Gastrocnemius medialis (tissue), 4 donors: ENCODE measurements at regions of chr16 and their contacts with region 1.

Region 1: GRCh38 chr16:70653809-70654771 is 7.7 kb downstream of the IL34 start:
- DNase-seq: peak; percentile 51 to 77
- ATAC-seq: peak; percentile 76 to 89
- H3K4me3 ChIP-seq: peak overlapping the region; percentile 21 to 28 (median 24)
- H3K27ac ChIP-seq: peak overlapping the region in 3 of 4 donors; percentile 33 to 66 (median 57)
- H3K4me1 ChIP-seq: peaks cover 4 to 11% of the 10 kb centered on the region in 2 donors
- H3K27me3 ChIP-seq: no peaks in the 10 kb centered on the region
- CTCF ChIP-seq: peak; percentile 88 to 94 (median 93)
- POLR2A ChIP-seq: no peak

Region 2: GRCh38 chr16:70364399-70364798 is 289.7 kb before region 1 on chr16:
- in situ Hi-C with region 1: loop called (anchors 10 to 25 kb)
- intact Hi-C with region 1: no loop called
- DNase-seq: no peak
- ATAC-seq: no peak
- H3K4me3 ChIP-seq: no peak overlapping the region
- H3K27ac ChIP-seq: peak overlapping the region in 1 of 4 donors; percentile 85
- H3K4me1 ChIP-seq: peaks cover 0 to 14% of the 10 kb centered on the region in 2 donors
- H3K27me3 ChIP-seq: no peaks in the 10 kb centered on the region
- CTCF ChIP-seq: no peak
- POLR2A ChIP-seq: no peak

Region 3: GRCh38 chr16:70372921-70373728 is 281.0 kb before region 1 on chr16:
- in situ Hi-C with region 1: loop called (anchors 10 to 25 kb)
- intact Hi-C with region 1: loop called (anchors 2 kb)
- DNase-seq: no peak
- ATAC-seq: no peak
- H3K4me3 ChIP-seq: no peak overlapping the region
- H3K27ac ChIP-seq: peak overlapping the region in 2 of 4 donors; percentile 71 to 82
- H3K4me1 ChIP-seq: peaks cover 7 to 17% of the 10 kb centered on the region in 2 donors
- H3K27me3 ChIP-seq: no peaks in the 10 kb centered on the region
- CTCF ChIP-seq: no peak
- POLR2A ChIP-seq: no peak

Region 4: GRCh38 chr16:70529051-70529777 is 124.9 kb before region 1 on chr16:
- in situ Hi-C with region 1: loop called (anchors 5 to 10 kb)
- intact Hi-C with region 1: loop called (anchors 1 kb)
- DNase-seq: no peak
- ATAC-seq: peak in 1 of 2 donors; percentile 17
- H3K4me3 ChIP-seq: no peak overlapping the region
- H3K27ac ChIP-seq: peak overlapping the region; percentile 19 to 70 (median 48)
- H3K4me1 ChIP-seq: peaks cover 36 to 41% of the 10 kb centered on the region in 2 donors
- H3K27me3 ChIP-seq: no peaks in the 10 kb centered on the region
- CTCF ChIP-seq: peak; percentile 37 to 61 (median 54)
- POLR2A ChIP-seq: no peak

Region 5: DNA sequence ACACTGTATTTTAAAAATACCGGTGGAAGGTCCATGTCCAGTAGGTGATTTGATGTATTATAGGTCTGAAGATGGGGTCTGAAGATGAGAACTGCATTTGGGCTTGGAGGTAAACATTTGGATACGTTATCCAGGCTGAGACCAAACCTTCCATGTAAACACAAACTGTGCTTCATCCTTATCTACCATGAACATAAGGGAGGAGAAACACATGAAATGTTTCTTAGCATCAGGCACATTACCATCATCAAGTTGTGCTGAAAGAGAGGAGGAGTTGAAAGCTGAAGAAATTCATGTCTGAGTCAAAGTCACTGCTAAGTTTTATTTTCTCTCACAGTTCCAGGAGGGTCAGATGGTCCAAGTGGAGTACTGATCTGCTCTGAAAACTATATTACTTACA is 119.1 kb before region 1 on chr16:
- in situ Hi-C with region 1: loop called in 3 of 4 experiments (anchors 5 to 10 kb)
- intact Hi-C with region 1: no loop called
- DNase-seq: no peak
- ATAC-seq: no peak
- H3K4me3 ChIP-seq: no peak overlapping the region
- H3K27ac ChIP-seq: no peak overlapping the region
- H3K4me1 ChIP-seq: no peaks in the 10 kb centered on the region
- H3K27me3 ChIP-seq: no peaks in the 10 kb centered on the region
- CTCF ChIP-seq: no peak
- POLR2A ChIP-seq: no peak

Region 6: GRCh38 chr16:70573451-70574121 is 80.5 kb before region 1 on chr16:
- in situ Hi-C with region 1: no loop called
- intact Hi-C with region 1: loop called (anchors 2 kb)
- DNase-seq: peak; percentile 74 to 76
- ATAC-seq: peak; percentile 81 to 83
- H3K4me3 ChIP-seq: peak overlapping the region in 1 of 4 donors; percentile 2
- H3K27ac ChIP-seq: peak overlapping the region; percentile 61 to 95 (median 91)
- H3K4me1 ChIP-seq: peaks cover 23 to 65% of the 10 kb centered on the region in 2 donors
- H3K27me3 ChIP-seq: no peaks in the 10 kb centered on the region
- CTCF ChIP-seq: no peak
- POLR2A ChIP-seq: no peak

Region 7: DNA sequence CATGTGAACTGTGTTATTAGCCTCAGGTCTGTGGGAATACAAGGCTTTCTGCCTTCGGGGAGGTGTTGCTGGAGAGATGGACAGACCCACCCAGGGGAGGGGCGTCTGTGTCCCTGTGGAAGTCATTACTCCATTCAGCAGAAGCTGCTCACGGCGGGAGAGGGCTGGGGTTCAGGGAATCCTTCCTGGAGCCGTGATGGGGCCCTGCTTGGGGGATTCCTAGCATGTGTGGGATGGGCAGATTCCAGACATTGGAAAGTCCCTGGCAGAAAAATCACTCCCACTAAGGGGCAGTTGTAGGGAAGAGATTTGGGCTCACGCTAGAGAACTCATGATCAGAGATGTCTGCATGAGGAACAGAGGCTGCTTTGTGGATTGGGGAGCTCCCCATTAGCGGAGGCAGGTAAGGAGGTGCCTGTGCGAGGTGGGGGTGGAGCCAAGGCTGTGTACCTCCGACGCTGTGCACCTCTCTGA is 64.1 kb before region 1 on chr16:
- in situ Hi-C with region 1: no loop called
- intact Hi-C with region 1: no loop called
- DNase-seq: no peak
- ATAC-seq: peak; percentile 13 to 19
- H3K4me3 ChIP-seq: no peak overlapping the region
- H3K27ac ChIP-seq: peak overlapping the region in 3 of 4 donors; percentile 11 to 65 (median 55)
- H3K4me1 ChIP-seq: peaks cover 10 to 16% of the 10 kb centered on the region in 2 donors
- H3K27me3 ChIP-seq: no peaks in the 10 kb centered on the region
- CTCF ChIP-seq: no peak
- POLR2A ChIP-seq: no peak

Region 8: DNA sequence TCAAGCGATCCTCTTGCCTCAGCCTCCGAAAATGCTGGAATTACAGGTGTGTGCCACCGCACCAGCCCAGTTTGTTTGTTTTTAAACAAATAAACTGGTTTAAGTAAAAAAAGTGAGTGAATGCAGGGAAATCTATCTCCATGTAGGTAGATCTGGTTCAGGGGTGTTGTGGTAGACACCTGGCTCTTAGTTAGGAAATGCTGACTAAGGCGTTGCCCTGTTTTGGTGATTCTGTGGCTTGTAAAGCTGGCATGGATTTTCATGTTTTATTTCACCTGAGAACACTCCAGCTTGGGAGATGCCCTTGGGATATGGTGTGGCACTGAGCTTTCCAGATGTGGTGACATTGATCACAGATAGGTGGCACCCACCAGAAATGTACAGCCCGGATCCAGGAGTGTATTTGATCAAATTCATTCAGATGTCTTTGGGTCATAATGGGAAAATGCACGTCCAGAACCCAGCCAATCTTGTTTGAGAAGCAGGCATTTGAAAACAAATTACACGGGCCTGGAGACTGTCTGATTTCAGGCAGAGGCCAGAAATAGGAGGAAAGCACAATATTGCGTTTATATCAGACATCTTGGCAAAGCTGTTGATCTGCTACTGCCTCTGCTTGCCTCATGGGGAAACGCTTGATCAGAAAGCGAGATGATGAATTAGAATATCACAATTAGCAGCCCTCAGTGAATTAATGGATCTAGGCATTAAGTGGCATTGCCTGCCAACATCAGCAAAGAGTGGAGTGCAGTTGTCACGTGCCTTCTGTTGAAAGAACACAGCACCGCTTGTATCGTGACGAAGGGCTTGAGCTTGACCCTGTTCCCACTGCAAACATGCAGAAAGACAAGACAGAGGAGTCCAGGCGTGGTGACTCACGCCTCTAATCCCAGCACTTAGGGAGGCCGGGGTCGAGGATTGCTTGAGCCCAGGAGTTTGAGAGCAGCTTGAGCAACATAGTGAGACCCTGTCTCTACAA is 15.0 kb before region 1 on chr16:
- in situ Hi-C with region 1: no loop called
- intact Hi-C with region 1: no loop called
- DNase-seq: no peak
- ATAC-seq: peak; percentile 62 to 84
- H3K4me3 ChIP-seq: no peak overlapping the region
- H3K27ac ChIP-seq: peak overlapping the region in 1 of 4 donors; percentile 15
- H3K4me1 ChIP-seq: no peaks in the 10 kb centered on the region
- H3K27me3 ChIP-seq: no peaks in the 10 kb centered on the region
- CTCF ChIP-seq: no peak
- POLR2A ChIP-seq: no peak

Region 9: GRCh38 chr16:70703041-70703834 is 49.1 kb after region 1 on chr16:
- in situ Hi-C with region 1: no loop called
- intact Hi-C with region 1: no loop called
- DNase-seq: peak in 1 of 2 donors; percentile 79
- ATAC-seq: peak; percentile 51 to 58
- H3K4me3 ChIP-seq: no peak overlapping the region
- H3K27ac ChIP-seq: peak overlapping the region; percentile 73 to 83 (median 76)
- H3K4me1 ChIP-seq: peaks cover 46 to 53% of the 10 kb centered on the region in 2 donors
- H3K27me3 ChIP-seq: no peaks in the 10 kb centered on the region
- CTCF ChIP-seq: peak; percentile 12 to 53 (median 30)
- POLR2A ChIP-seq: peak; percentile 19 to 29